ENCODE measurements at regions of chr9 and their contacts with region 1.

Region 1: GRCh38 chr9:107443786-107444185 is 45.8 kb downstream of the KLF4 start:
- DNase-seq: no peak
- H3K4me3 Mint-ChIP-seq: no peak overlapping the region
- H3K27ac Mint-ChIP-seq: no peak overlapping the region
- H3K4me1 Mint-ChIP-seq: no peaks in the 10 kb centered on the region
- H3K27me3 Mint-ChIP-seq: no peaks in the 10 kb centered on the region

Region 2: DNA sequence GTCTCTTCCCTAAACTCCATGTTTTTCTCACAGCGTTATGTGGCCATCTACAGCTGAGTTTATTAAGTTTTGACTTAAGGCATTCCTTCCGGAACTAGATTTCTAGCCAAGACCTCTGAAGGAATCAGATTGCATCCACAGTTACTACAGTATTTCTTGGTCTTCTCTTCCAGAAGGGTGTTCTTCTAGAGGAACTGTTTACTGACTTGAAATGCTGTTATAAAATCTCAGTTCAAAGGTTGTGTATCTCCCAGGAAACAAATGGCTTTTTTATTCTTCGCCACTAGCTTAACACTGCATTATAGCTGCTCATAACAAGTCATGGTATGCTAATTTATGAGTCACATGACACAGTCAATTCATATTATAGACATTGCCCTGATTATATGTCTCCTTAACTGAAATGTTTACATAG is 216.0 kb before region 1 on chr9:
- CTCF ChIA-PET with region 1: no interaction called
- POLR2A ChIA-PET with region 1: no interaction called
- DNase-seq: no peak
- H3K4me3 Mint-ChIP-seq: no peak overlapping the region
- H3K27ac Mint-ChIP-seq: no peak overlapping the region
- H3K4me1 Mint-ChIP-seq: no peaks in the 10 kb centered on the region
- H3K27me3 Mint-ChIP-seq: peaks cover 46% of the 10 kb centered on the region

Region 3: GRCh38 chr9:107425101-107426045 is 18.4 kb before region 1 on chr9:
- CTCF ChIA-PET with region 1: interaction called, 13 read pairs
- POLR2A ChIA-PET with region 1: no interaction called
- DNase-seq: peak; percentile 43
- H3K4me3 Mint-ChIP-seq: no peak overlapping the region
- H3K27ac Mint-ChIP-seq: no peak overlapping the region
- H3K4me1 Mint-ChIP-seq: peaks cover 6% of the 10 kb centered on the region
- H3K27me3 Mint-ChIP-seq: peaks cover 2% of the 10 kb centered on the region